ENCODE measurements at regions of chr6 and their contacts with region 1.

Region 1: GRCh38 chr6:161922631-161923119 is 648.8 kb upstream of the AGPAT4 start:
- DNase-seq: peak; percentile 22 to 34
- ATAC-seq: peak; percentile 55 to 93 (median 74)
- H3K4me3 ChIP-seq: no peak overlapping the region
- H3K27ac ChIP-seq: no peak overlapping the region
- H3K4me1 ChIP-seq: peaks cover 0 to 5% (median 0%) of the 10 kb centered on the region in 9 donors
- H3K27me3 ChIP-seq: no peaks in the 10 kb centered on the region
- CTCF ChIP-seq: peak; percentile 7 to 61 (median 42)

Region 2: DNA sequence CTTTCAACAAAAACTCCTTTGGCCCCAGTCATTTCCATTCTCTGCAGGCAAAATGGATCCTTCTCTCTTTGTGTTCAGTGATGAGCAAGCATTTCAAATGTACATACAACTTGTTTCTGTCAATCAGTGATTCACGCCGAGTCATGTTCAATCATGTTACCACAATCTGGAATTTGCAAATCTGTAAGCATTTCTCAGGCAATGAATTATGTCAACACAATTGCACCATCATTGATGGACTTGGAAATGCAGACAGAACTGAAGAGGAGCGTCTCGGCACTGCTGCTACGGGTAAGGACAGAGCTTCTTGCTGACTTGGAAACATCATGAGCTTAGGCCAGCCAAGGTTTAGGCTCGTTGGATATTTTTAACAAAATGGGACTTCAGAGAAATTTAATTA is 516.0 kb before region 1 on chr6:
- intact Hi-C with region 1: loop called in 1 of 10 experiments (anchors 10 kb)
- DNase-seq: no peak
- ATAC-seq: no peak
- H3K4me3 ChIP-seq: no peak overlapping the region
- H3K27ac ChIP-seq: no peak overlapping the region
- H3K4me1 ChIP-seq: peaks cover 0 to 10% (median 0%) of the 10 kb centered on the region in 9 donors
- H3K27me3 ChIP-seq: no peaks in the 10 kb centered on the region
- CTCF ChIP-seq: no peak

Region 3: DNA sequence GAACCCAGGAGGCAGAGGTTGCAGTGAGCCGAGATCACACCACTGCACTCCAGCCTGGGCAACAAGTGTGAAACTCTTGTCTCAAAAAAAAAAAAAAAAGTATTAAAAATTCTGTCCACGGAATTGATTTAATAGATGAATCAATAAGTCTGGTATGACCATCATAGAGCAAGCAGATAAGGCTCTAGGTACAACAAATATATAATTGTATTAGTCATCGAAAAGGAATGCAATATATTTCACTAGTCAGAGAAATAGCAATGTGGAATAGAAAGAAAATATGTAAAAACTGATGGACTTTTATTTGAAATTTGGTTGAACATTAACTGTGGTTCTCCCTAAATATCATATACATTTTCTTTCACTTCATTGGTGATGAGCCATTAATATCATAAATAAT is 172.0 kb before region 1 on chr6:
- intact Hi-C with region 1: loop called in 1 of 10 experiments (anchors 10 kb)
- DNase-seq: no peak
- ATAC-seq: no peak
- H3K4me3 ChIP-seq: no peak overlapping the region
- H3K27ac ChIP-seq: no peak overlapping the region
- H3K4me1 ChIP-seq: no peaks in the 10 kb centered on the region
- H3K27me3 ChIP-seq: no peaks in the 10 kb centered on the region
- CTCF ChIP-seq: no peak

Measured in heart right ventricle (tissue), 16 donors.